Mammary epithelial cell (primary cell): ENCODE measurements at regions of chr17 and their contacts with region 1.

Region 1: GRCh38 chr17:29474297-29474696 is 84.1 kb downstream of the TAOK1 start:
- DNase-seq: no peak
- H3K4me3 ChIP-seq: no peak overlapping the region
- H3K27ac ChIP-seq: no peak overlapping the region
- H3K4me1 ChIP-seq: no peaks in the 10 kb centered on the region
- H3K27me3 ChIP-seq: no peaks in the 10 kb centered on the region
- CTCF ChIP-seq: no peak

Region 2: GRCh38 chr17:29401258-29401657 is 73.0 kb before region 1 on chr17:
- CTCF ChIA-PET with region 1: no interaction called
- dilution Hi-C with region 1: loop called (anchors 5 kb)
- in situ Hi-C with region 1: no loop called
- intact Hi-C with region 1: no loop called
- DNase-seq: no peak
- H3K4me3 ChIP-seq: no peak overlapping the region
- H3K27ac ChIP-seq: no peak overlapping the region
- H3K4me1 ChIP-seq: no peaks in the 10 kb centered on the region
- H3K27me3 ChIP-seq: no peaks in the 10 kb centered on the region
- CTCF ChIP-seq: no peak

Region 3: DNA sequence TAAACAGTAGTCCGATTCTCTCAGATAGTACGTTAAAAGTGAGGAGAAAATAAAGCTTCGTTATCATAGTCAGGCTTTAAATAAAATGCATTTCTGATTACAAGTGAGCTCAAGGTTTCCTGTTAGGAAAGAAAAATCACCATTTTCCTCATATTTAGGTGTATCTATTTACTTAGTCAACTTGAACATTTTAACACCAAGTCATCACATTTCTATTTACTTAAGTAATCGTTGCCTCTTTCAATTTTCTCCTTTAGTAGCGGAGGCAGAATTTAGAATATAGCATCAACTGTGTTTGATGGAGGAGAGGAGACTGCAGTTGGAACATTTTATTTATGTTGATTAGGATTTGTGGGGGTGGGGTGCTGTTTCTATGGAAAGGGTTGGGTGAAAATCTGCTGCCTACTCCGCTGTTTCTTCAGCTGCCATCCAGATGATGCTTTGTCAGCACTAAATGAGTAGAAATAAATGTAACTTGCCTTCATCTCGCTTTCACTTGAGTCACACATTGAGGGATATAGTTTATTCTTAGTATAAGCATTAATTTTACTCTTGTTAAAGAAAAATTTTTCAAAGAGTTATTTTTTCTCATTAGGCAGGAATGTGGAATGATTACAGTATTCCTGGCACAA is 50.3 kb after region 1 on chr17:
- CTCF ChIA-PET with region 1: no interaction called
- dilution Hi-C with region 1: loop called (anchors 5 kb)
- in situ Hi-C with region 1: no loop called
- intact Hi-C with region 1: no loop called
- DNase-seq: no peak
- H3K4me3 ChIP-seq: no peak overlapping the region
- H3K27ac ChIP-seq: no peak overlapping the region
- H3K4me1 ChIP-seq: no peaks in the 10 kb centered on the region
- H3K27me3 ChIP-seq: no peaks in the 10 kb centered on the region
- CTCF ChIP-seq: no peak